ENCODE measurements at regions of chr19 and their contacts with region 1.

Region 1: DNA sequence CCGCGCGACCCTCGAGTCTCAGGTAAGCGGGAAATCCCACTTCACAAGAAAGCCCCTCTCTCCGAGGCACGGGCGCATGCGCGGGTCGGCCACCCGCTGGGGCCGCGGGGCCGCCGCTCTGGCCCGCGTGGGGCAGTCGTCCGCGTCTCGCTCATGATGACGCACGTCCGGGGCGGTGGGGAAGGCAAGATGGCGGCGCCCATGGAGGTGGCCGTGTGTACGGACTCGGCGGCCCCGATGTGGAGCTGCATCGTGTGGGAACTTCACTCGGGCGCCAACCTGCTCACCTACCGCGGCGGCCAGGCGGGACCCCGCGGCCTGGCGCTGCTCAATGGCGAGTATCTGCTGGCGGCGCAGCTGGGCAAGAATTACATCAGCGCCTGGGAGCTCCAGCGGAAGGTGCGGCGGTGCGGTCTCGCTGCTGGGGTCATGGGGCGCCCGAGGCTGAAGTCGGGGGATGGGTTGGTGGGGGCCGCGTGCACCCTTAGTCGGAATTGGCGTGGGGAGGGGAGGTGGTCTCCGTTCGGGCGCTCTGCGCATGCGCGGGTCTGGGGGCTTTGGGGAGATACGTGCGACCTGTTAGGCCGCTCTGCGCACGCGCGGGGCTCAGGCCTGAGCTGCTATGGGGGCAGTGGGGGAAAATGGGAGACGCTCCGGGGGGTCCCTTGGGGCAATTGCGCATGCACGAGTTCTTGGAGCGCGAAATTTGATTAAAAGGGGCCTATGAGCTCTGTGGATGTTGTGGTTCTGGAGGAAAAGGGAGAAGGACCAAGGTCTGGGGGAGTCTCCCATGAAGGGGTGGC is at the start of gene WDR18:
- DNase-seq: peak; percentile 94
- ATAC-seq: peak; percentile 91
- H3K4me3 Mint-ChIP-seq: peak within 1 kb of the TSS; percentile 91
- H3K27ac Mint-ChIP-seq: peak within 1 kb of the TSS; percentile 90
- H3K4me1 Mint-ChIP-seq: peaks cover 34% of the 10 kb centered on the region
- H3K27me3 Mint-ChIP-seq: no peaks in the 10 kb centered on the region
- total RNA-seq, gene WDR18: 51.5 to 53.0 TPM

Region 2: DNA sequence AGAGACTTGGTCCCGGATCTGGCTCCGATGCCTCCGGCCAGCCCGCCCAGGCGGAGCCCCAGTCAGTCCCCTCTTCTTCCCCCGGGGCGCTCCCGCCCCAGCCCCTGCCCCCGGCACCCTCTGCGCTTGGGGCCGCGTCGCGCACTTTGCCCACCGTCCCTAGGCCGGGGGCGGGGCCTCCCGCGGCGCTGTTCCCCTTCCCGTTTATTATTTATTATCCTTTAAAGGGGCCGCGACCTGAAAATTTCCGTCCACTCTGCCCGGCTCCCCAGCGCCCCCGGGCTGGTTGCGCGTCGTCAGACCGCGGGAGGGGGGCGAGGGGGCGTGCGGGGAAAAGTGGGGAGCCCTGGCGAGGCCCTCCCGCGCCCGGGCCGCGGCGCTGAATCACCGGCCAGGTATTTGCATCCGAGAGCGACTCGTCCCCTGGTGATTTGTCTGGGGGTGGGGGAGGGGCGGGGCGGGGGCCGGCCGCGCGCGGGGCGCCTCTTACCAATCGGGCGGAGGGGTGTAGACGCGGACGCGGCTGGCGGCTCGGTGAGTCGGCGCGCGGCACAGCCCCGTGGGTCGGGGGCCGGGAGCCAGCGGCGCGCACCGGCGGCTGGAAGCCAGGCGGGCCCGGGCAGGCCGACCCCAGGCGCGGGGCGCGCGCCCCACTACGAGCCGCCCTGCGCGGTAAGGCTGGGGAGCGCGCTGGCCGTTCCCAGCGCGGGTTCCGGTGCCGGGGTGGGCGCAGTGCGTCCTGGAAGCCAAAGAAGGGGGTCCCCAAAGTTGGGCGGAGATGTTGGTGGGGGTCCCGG is 58.6 kb before region 1 on chr19 and contains the start of gene ARID3A:
- CTCF ChIA-PET with region 1: interaction called, 125 read pairs
- POLR2A ChIA-PET with region 1: interaction called, 13 read pairs
- DNase-seq: peak; percentile 83
- ATAC-seq: peak; percentile 68
- H3K4me3 Mint-ChIP-seq: peak within 1 kb of the TSS; percentile 79
- H3K27ac Mint-ChIP-seq: peak within 1 kb of the TSS; percentile 89
- H3K4me1 Mint-ChIP-seq: peaks cover 18% of the 10 kb centered on the region
- H3K27me3 Mint-ChIP-seq: no peaks in the 10 kb centered on the region
- total RNA-seq, gene ARID3A: 26.7 to 27.7 TPM

Region 3: DNA sequence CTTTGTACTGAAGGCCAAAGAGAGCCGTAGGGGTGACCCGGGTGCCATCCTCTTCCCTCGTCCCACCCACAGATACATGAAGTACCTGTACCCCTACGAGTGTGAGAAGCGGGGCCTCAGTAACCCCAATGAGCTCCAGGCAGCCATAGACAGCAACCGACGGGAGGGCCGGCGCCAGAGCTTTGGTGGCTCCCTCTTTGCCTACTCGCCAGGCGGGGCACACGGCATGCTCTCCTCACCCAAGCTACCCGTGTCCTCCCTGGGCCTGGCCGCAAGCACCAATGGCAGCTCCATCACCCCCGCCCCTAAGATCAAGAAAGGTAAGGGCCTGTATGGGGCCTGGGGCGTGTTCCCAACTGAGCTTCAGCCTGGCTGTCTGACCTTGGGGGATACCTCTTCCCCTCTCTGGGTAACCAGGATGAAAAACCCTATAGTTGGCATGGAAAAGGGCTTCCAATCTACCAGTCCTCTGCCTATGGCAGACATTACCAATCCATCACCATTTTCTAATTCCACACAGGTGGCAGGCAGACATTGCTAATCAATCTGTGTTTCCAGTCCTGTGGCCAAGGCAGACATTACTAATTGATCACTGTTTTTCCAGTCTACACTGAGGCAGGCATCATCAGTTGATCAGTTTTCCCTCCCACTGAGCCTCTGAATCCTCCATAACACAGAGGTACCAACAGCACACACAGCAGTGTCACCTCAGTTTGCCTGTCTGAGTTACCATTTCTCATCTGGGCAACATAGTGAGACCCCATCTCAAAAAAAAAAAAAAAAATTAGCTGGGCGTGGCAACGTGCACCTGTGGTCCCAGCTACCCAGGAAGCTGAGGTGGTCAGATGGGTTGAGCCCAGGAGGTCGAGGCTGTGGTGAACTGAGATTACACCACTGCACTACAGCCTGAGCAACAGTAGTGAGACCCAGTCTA is 19.3 kb before region 1 on chr19:
- CTCF ChIA-PET with region 1: no interaction called
- POLR2A ChIA-PET with region 1: no interaction called
- DNase-seq: no peak
- ATAC-seq: no peak
- H3K4me3 Mint-ChIP-seq: no peak overlapping the region
- H3K27ac Mint-ChIP-seq: no peak overlapping the region
- H3K4me1 Mint-ChIP-seq: peaks cover 8% of the 10 kb centered on the region
- H3K27me3 Mint-ChIP-seq: no peaks in the 10 kb centered on the region